ENCODE measurements at regions of chr1 and their contacts with region 1.

Region 1: GRCh38 chr1:228165372-228166169 is at the start of gene IBA57:
- DNase-seq: peak; percentile 99
- ATAC-seq: peak; percentile 89
- H3K4me3 ChIP-seq: peak within 1 kb of the TSS; percentile 81
- H3K27ac ChIP-seq: peak within 1 kb of the TSS; percentile 87
- H3K4me1 ChIP-seq: peaks cover 12% of the 10 kb centered on the region
- H3K27me3 ChIP-seq: no peaks in the 10 kb centered on the region
- CTCF ChIP-seq: peak; percentile 98
- POLR2A ChIP-seq: peak; percentile 92
- RAD21 ChIP-seq: peak; percentile 35
- total RNA-seq, gene IBA57: 1.7 and 2.0 TPM in 2 replicates

Region 2: DNA sequence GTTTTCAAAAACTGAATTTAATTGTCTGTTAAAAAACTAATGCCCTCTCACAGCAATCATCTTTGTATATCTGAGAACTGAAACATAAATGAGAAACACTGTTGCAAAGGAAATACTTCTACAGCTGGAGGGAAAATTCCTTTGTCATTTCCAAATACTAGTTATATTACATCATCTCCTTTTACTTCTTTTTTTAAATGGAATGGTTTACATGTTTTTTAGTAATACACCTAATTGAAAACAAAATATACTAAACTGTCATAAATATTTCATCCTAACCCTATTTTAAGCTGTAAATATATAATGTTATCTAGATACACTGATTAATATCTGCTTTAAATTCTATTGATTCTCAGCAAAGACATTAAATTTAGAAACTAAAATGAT is 866.3 kb before region 1 on chr1:
- CTCF ChIA-PET with region 1: no interaction called
- POLR2A ChIA-PET with region 1: interaction called, 12 read pairs
- dilution Hi-C with region 1: no loop called
- in situ Hi-C with region 1: no loop called
- intact Hi-C with region 1: no loop called
- DNase-seq: peak; percentile 61
- ATAC-seq: peak; percentile 80
- H3K4me3 ChIP-seq: peak overlapping the region; percentile 4; the same call in 1 of the 2 replicates
- H3K27ac ChIP-seq: peak overlapping the region; percentile 66; the same call in 1 of the 2 replicates
- H3K4me1 ChIP-seq: peaks cover 3% of the 10 kb centered on the region
- H3K27me3 ChIP-seq: no peaks in the 10 kb centered on the region
- CTCF ChIP-seq: no peak
- POLR2A ChIP-seq: no peak
- RAD21 ChIP-seq: no peak

Region 3: GRCh38 chr1:228486596-228487335 is 321.2 kb after region 1 on chr1:
- CTCF ChIA-PET with region 1: no interaction called
- POLR2A ChIA-PET with region 1: interaction called, 22 read pairs
- dilution Hi-C with region 1: no loop called
- in situ Hi-C with region 1: no loop called
- intact Hi-C with region 1: no loop called
- DNase-seq: peak; percentile 86
- ATAC-seq: peak; percentile 83
- H3K4me3 ChIP-seq: peak overlapping the region; percentile 70
- H3K27ac ChIP-seq: peak overlapping the region; percentile 97
- H3K4me1 ChIP-seq: peaks cover 18% of the 10 kb centered on the region
- H3K27me3 ChIP-seq: no peaks in the 10 kb centered on the region; the same call in 1 of the 2 replicates
- CTCF ChIP-seq: no peak
- POLR2A ChIP-seq: no peak
- RAD21 ChIP-seq: no peak